GM10248 (cell line): ENCODE measurements at regions of chr4 and their contacts with region 1.

Region 1: DNA sequence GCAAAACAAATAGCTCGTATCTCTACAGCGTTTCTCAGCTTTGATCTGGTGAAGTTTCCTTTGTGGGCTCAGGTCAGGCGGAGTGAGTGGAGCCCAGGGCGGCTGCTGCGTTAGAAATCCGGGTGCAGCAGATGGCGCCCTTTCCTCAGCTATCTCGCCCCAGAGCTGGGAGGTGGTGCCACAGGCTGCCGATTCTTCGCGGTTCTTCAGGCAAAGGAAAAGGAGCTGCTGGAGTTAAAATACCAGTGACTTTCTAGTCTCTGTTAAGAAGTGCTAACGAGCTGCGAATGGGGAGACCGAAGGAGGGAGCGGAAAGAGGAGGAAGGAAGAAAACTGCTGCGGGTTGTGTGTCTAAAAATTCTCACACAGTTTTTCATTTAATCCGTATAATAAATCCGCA is 114.6 kb downstream of the CPE start:
- DNase-seq: peak; percentile 51
- CTCF ChIP-seq: peak; percentile 89

Region 2: DNA sequence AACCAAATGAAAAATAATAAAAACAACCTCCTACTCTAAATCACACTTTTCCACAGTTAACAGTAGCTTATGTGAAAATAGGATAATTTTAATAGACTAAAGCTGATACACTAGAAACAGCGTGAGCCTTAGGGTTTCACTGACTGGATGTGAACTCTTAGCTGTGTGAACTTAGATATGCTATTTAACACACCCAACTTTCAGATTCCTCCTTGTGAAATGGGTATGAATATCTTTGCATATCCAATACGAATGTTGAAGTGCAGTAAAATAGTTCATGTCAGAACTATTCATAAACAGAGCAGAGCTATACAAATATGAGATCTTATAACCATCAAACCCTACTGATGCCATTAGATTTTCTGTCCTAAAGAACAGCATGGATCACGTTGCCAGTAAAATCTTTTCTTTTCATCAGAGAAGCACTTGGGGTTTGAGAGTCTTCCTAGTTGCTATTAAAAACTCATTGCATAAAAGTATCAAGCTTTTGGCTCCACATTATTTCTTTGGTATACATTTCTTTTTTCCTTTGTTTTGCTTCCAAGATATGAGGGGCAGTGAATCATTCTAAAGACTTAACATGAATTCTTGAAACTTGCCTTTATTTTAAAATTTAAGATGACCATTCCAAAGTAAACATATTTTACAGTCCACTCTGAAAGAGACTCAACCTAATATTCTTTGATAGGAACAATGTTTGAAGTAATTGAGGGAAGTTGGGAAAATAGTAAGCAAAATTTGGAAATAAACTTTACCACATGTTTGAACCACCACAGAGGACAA is 12.1 kb before region 1 on chr4:
- CTCF ChIA-PET with region 1: interaction called, 13 read pairs
- POLR2A ChIA-PET with region 1: no interaction called
- DNase-seq: no peak
- CTCF ChIP-seq: no peak

Region 3: GRCh38 chr4:165516281-165516833 is 23.0 kb after region 1 on chr4:
- CTCF ChIA-PET with region 1: interaction called, 11 read pairs
- POLR2A ChIA-PET with region 1: no interaction called
- DNase-seq: no peak
- CTCF ChIP-seq: no peak

Region 4: GRCh38 chr4:165524532-165525190 is 31.3 kb after region 1 on chr4:
- CTCF ChIA-PET with region 1: interaction called, 11 read pairs
- POLR2A ChIA-PET with region 1: no interaction called
- DNase-seq: no peak
- CTCF ChIP-seq: no peak

Region 5: DNA sequence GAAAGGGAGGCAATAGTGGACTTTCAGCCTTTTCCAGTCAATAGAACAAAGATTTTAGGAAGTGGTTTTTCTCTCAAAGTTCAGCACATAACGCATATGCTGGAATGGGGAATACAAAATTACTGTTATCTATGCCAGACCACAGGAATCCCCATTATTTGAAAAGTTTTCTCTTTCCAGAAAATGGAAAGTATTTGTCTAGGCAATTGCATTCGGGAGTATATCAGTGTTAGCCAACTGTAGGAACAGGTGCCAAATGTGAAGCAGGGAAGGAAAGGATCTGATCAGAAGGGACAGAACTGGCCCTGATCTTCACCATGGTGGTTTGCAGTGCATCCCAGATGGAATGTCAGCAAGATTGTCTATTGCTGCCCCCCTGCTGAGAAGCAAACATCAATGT is 99.0 kb after region 1 on chr4:
- CTCF ChIA-PET with region 1: no interaction called
- POLR2A ChIA-PET with region 1: no interaction called
- DNase-seq: no peak
- CTCF ChIP-seq: no peak

Region 6: DNA sequence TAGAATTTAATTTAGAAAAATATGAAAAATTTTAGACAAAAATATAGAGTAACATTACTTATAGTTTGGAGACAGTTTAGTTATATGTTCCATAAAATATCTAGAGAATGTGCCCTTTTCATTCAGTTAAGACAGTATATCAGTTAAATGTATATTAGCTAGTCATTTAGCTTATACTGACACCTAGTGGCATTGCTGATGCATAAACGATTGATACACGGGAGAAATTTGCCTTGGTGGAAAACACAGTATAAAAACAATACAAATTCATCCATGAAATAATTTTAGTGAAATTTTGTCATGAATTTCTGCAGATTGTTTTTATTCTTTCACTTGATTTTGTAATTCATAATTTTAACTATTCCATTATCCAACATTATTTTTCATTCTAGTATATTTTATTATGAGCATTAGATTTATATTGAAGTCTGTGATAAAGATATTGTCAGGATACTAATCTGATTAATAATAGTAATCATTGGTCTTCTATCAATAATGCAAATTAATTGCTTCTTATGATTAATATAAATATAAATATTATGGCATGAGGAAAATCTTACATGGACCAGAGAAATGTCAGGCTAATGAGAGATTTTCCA is 598.7 kb after region 1 on chr4:
- CTCF ChIA-PET with region 1: interaction called, 23 read pairs
- POLR2A ChIA-PET with region 1: no interaction called
- DNase-seq: peak; percentile 6
- CTCF ChIP-seq: peak; percentile 58